Dorsolateral prefrontal cortex (tissue), 120 donors: ENCODE measurements at regions of chr3 and their contacts with region 1.

Region 1: DNA sequence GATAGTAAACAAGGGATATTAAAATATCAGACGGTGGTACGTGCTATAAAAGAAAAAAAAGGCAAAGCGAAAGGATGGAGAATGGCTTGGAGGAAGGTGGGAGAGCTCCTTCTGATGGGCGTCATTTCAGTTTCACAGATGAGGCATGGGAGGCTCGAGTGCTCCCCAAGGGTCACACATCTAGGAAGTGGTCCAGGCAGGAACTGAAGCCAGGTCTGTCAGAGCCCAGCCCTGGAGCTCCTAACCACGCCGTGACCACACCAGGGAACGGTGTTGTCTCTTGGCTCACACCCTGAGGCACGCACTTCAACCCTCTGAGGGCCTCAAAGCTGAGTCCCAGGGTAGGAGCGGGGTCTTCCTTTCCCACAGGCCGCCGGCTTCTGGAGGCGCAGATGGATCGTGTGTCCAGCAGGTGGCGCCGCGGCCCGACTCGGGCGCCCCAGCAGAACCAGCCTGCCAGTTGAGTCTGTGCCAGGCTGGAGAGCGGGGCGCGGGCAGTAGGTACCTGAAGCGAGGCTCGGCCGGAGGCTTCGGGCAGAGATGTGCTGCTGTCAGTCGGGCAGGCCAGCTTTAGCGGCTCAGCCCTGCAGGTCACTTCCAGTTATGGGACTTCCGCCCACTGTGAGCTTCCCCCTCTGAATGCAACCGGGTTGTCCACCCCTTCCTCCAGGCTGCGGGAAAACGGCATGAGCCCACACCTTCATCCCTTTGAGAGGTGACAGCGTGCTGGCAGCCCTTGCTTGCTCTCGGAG is 68.1 kb downstream of the SLC6A1 start:
- DNase-seq: peak; percentile 35 to 86 (median 70)
- H3K4me3 ChIP-seq: peak overlapping the region in 57 of 59 donors; percentile 9 to 67 (median 47)
- H3K27ac ChIP-seq: peak overlapping the region in 34 of 59 donors; percentile 3 to 75 (median 40)
- H3K27me3 ChIP-seq: peaks cover 0 to 13% (median 0%) of the 10 kb centered on the region in 45 donors
- CTCF ChIP-seq: peak; percentile 78 to 98 (median 95)

Region 2: DNA sequence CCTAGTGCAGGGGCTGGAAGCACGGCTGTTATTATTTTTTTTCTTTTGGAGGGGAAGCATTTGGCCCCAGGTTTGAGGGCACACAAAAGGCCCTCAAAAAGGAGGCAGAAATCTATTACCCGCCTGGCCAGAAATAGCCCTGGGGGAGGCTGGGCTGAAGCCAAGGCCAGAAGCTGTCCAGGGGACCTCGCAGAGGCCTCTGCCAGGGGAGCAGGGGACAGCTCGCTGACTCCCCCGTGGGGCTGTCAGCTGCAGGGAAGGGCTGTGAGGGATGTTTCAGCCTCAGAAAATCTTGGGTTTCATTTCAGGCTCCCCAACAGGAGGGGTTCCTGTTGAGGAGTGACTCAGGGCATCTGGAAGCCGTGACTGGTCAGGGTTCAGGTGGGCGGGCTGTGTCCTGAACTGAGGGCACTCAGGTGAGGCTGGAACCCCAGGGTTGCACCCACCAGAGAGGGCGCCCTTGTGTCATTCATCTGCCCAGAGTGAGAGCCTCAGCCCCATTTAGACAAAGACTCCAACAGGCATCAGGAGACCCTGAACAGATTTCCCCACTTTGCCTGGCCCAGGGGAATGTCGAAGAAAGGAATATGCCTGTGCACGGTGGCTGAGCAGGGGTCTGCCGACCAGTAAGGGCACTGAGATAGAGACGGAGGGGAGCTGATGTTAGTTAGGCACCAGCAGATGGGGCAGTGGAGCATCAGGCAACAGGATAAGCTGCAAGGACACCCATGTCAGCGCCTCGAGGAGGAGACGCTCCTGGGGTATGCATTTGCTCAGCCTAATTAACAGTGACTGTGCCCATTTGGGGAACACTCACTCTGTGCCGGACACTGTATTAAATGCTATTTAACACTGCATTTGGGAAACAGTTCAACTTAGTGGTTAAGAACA is 288.2 kb before region 1 on chr3:
- intact Hi-C with region 1: loop called in 1 of 2 experiments (anchors 5 kb)
- DNase-seq: no peak
- H3K4me3 ChIP-seq: no peak overlapping the region
- H3K27ac ChIP-seq: no peak overlapping the region
- H3K27me3 ChIP-seq: peaks cover 0 to 3% (median 0%) of the 10 kb centered on the region in 45 donors
- CTCF ChIP-seq: peak in 34 of 56 donors; percentile 6 to 46 (median 26)